Activated T-helper 2 cell treated with anti-CD3 and anti-CD28 coated beads, Interferon-gamma antibody, Interleukin-2, Interleukin-4, amounts not matched to agents 10 μg/mL and 5 μg/mL and 100 μg/mL, durations not matched to agents 14 hours and 24 hours and 36 hours (primary cell): ENCODE measurements at regions of chr10 and their contacts with region 1.

Region 1: GRCh38 chr10:119305860-119306513 is 98.6 kb downstream of the GRK5 start:
- DNase-seq: peak; percentile 85
- H3K4me3 Mint-ChIP-seq: peak overlapping the region; percentile 74
- H3K27ac Mint-ChIP-seq: peak overlapping the region; percentile 100
- H3K4me1 Mint-ChIP-seq: peaks cover 70% of the 10 kb centered on the region
- H3K27me3 Mint-ChIP-seq: peaks cover 4% of the 10 kb centered on the region

Region 2: DNA sequence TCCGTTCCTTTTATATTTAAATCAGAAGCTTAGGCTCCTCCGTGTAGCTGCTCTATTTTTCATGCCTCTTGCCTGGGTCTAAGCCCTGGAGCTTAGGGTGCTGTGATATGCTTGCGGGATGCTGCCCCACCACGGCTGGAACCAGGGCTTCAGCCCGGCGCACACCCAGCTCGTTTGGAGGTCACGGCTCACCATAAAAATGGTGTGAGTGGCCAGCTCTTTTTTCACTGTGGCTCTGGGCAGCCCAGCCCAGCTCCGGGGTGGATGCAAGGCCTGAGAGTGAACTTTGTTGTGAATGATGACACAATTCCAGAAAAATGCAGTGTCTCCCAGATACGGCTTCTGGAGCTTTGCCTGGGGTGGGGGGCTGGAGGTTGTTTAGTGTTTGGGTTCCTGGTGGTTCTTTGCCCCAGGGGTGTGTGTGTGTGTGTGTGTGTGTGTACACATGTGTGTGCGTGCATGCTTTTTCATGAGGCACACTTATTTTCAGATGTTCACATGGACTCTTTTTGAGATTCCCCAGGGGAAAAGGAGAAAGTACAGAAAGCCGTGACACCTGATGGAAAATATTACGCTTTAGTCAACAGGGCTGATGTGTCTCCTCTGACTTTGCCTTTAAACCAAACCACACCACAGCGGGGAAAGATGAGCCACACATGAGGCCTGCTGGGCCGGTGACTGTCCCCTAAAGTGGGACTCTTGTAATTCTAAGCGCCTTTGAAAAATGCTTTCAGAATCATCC is 52.4 kb before region 1 on chr10:
- intact Hi-C with region 1: loop called (anchors 2 kb)
- DNase-seq: no peak
- H3K4me3 Mint-ChIP-seq: no peak overlapping the region
- H3K27ac Mint-ChIP-seq: peak overlapping the region; percentile 89
- H3K4me1 Mint-ChIP-seq: peaks cover 33% of the 10 kb centered on the region
- H3K27me3 Mint-ChIP-seq: no peaks in the 10 kb centered on the region

Region 3: GRCh38 chr10:119283818-119284217 is 22.2 kb before region 1 on chr10:
- intact Hi-C with region 1: loop called (anchors 2 kb)
- DNase-seq: no peak
- H3K4me3 Mint-ChIP-seq: no peak overlapping the region
- H3K27ac Mint-ChIP-seq: peak overlapping the region; percentile 76
- H3K4me1 Mint-ChIP-seq: peaks cover 65% of the 10 kb centered on the region
- H3K27me3 Mint-ChIP-seq: no peaks in the 10 kb centered on the region

Region 4: DNA sequence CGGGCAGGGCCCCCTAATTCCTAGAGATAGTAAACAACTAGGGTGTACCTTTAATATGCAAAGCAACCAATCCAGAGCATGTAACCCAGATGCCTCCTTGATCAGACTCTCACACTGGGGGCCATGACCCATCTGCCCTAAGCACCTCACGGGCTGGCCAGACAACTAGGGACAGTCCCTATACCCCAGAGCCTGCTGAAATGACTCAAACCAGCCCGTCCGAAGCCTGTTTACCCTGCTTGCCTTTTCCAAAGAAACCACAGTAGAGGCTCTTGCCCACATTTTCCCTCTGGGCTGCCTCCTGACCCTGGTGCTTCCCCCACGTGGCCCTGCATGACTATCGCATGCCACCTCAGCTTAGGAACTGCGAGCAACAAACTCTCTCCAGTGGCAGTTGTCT is 190.3 kb after region 1 on chr10:
- intact Hi-C with region 1: loop called (anchors 5 kb)
- DNase-seq: peak; percentile 22
- H3K4me3 Mint-ChIP-seq: no peak overlapping the region
- H3K27ac Mint-ChIP-seq: peak overlapping the region; percentile 60
- H3K4me1 Mint-ChIP-seq: peaks cover 68% of the 10 kb centered on the region
- H3K27me3 Mint-ChIP-seq: no peaks in the 10 kb centered on the region

Region 5: GRCh38 chr10:119650692-119651513 is 344.9 kb after region 1 on chr10 and contains the start of gene BAG3:
- intact Hi-C with region 1: loop called (anchors 1 kb)
- DNase-seq: peak; percentile 73
- H3K4me3 Mint-ChIP-seq: peak within 1 kb of the TSS; percentile 96
- H3K27ac Mint-ChIP-seq: peak within 1 kb of the TSS; percentile 95
- H3K4me1 Mint-ChIP-seq: peaks cover 45% of the 10 kb centered on the region
- H3K27me3 Mint-ChIP-seq: peaks cover 9% of the 10 kb centered on the region
- total RNA-seq, gene BAG3: 31.8 and 33.3 TPM in 2 replicates